Sigmoid colon (tissue), 7 donors: ENCODE measurements at regions of chr17 and their contacts with region 1.

Region 1: GRCh38 chr17:80477647-80478478 is 1.5 kb upstream of the NPTX1 start:
- DNase-seq: peak; percentile 81
- H3K4me3 ChIP-seq: peak overlapping the region; percentile 30 to 64 (median 58)
- H3K27ac ChIP-seq: peak overlapping the region in 3 of 4 donors; percentile 15 to 85 (median 85)
- H3K4me1 ChIP-seq: peaks cover 6 to 56% (median 54%) of the 10 kb centered on the region in 4 donors
- H3K27me3 ChIP-seq: peaks cover 25 to 81% (median 72%) of the 10 kb centered on the region in 3 donors
- CTCF ChIP-seq: peak in 3 of 4 experiments; percentile 30 to 55 (median 40)
- EP300 ChIP-seq: no peak
- POLR2A ChIP-seq: no peak

Region 2: GRCh38 chr17:80426681-80427326 is 51.1 kb before region 1 on chr17:
- intact Hi-C with region 1: loop called (anchors 2 kb)
- DNase-seq: peak; percentile 79
- H3K4me3 ChIP-seq: no peak overlapping the region
- H3K27ac ChIP-seq: no peak overlapping the region
- H3K4me1 ChIP-seq: peaks cover 0 to 10% (median 9%) of the 10 kb centered on the region in 4 donors
- H3K27me3 ChIP-seq: no peaks in the 10 kb centered on the region
- CTCF ChIP-seq: peak; percentile 93 to 98 (median 96)
- EP300 ChIP-seq: no peak
- POLR2A ChIP-seq: no peak

Region 3: DNA sequence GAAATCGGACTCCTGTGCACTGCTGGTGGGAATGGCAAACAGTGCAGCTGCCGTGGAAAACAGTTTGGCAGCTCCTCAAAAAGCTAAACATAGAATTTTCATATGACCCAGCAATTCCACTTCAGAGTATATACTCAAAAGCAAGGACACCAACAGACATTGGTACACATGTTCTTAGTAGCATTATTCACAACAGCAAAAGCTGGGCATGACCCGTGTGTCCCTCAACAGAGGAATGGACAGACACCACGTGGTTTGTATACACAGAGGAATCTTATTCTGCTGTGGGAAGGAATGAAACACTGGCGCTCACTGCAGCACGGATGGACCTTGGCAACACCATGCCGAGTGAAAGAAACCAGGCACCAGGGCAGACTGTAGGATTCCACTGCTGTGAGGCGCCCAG is 17.4 kb before region 1 on chr17:
- intact Hi-C with region 1: loop called (anchors 2 kb)
- DNase-seq: peak; percentile 89
- H3K4me3 ChIP-seq: peak overlapping the region in 1 of 4 donors; percentile 4
- H3K27ac ChIP-seq: peak overlapping the region; percentile 47 to 99 (median 75)
- H3K4me1 ChIP-seq: peaks cover 0 to 74% (median 54%) of the 10 kb centered on the region in 4 donors
- H3K27me3 ChIP-seq: no peaks in the 10 kb centered on the region
- CTCF ChIP-seq: no peak
- EP300 ChIP-seq: peak in 2 of 4 donors; percentile 19 to 73
- POLR2A ChIP-seq: no peak

Region 4: DNA sequence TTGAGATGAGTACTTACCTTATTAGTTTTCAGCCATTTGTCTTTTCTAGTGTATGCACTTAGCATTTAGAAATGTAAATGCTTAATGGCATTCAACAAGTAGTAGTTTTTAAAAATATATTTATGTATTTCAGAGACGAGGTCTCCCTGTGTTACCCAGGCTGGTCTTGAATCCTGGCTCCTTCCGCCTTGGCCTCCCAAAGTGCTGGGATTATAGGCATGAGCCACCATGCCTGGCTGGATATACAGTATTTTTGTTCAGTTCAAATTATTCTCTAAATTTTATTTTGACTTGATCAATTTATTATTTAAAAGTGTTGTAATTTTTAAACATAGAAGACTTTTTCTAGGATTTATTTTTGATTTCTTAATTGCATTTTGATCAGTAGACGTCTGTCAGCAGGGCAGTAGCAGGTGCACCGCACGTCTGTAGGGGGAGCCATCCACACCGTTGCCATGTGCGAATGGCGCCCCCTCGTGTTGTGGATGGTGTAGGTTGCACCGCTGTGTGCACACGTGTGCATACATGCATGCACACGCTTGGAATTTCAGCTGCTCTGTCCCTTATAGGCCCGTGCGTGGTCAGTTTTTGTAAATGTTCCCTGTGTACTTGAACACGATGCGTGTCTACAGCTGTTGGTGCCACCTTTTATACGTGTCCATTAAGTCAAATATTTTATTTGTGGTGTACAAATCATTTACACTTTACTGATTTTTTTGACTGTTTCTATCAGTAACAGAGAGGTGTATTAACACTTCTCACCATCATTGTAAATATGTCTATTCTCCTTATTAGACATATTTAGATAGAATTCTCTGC is 97.4 kb after region 1 on chr17:
- intact Hi-C with region 1: loop called (anchors 1 kb)
- DNase-seq: peak; percentile 90
- H3K4me3 ChIP-seq: no peak overlapping the region
- H3K27ac ChIP-seq: no peak overlapping the region
- H3K4me1 ChIP-seq: peaks cover 0 to 13% (median 0%) of the 10 kb centered on the region in 4 donors
- H3K27me3 ChIP-seq: no peaks in the 10 kb centered on the region
- CTCF ChIP-seq: peak; percentile 98 to 100 (median 100)
- EP300 ChIP-seq: no peak
- POLR2A ChIP-seq: no peak

Region 5: DNA sequence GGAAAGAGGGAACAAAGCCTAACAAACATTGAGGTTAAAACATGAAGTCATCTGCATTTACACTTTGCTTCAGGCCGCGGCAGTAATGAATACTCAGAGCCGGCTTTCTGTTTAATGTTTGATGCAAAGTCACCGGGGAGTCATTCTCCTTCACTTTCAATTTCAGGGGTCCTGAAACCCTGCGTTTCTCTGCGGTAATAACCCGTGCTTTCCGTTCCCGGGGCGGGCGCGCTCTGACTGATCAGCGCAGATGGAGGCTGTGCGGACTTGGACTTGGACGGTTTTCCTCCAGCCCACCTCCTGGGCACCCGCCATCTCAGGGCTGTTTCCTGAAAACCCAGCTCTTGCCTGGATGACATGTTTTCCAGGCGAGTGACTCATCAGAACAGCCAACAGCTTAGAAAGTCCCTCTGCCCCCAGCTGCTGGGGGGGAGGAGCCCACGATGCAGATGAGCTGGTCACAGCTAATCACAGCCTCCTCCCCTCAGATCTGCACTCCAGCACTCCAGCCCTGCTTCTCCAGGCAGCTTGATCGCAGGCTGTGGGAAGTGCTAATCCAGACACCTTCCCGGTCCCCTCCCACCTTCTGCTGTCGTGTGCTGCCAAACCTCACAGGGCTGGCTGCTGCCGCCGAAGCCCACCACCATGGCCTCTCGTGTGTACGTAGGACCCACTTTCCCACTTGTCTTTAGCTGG is 355.2 kb after region 1 on chr17:
- intact Hi-C with region 1: loop called (anchors 10 kb)
- DNase-seq: peak; percentile 97
- H3K4me3 ChIP-seq: peak overlapping the region; percentile 35 to 56 (median 52)
- H3K27ac ChIP-seq: peak overlapping the region; percentile 89 to 93 (median 91)
- H3K4me1 ChIP-seq: peaks cover 0 to 26% (median 22%) of the 10 kb centered on the region in 4 donors
- H3K27me3 ChIP-seq: no peaks in the 10 kb centered on the region
- CTCF ChIP-seq: no peak
- EP300 ChIP-seq: peak in 1 of 4 donors; percentile 61
- POLR2A ChIP-seq: peak; percentile 58 to 75

Region 6: GRCh38 chr17:80866147-80866793 is 388.4 kb after region 1 on chr17:
- intact Hi-C with region 1: loop called (anchors 5 kb)
- DNase-seq: peak; percentile 83
- H3K4me3 ChIP-seq: no peak overlapping the region
- H3K27ac ChIP-seq: no peak overlapping the region
- H3K4me1 ChIP-seq: peaks cover 0 to 13% (median 11%) of the 10 kb centered on the region in 4 donors
- H3K27me3 ChIP-seq: no peaks in the 10 kb centered on the region
- CTCF ChIP-seq: peak; percentile 46 to 83 (median 78)
- EP300 ChIP-seq: no peak
- POLR2A ChIP-seq: no peak